CD4-positive, alpha-beta memory T cell (primary cell): ENCODE measurements at regions of chr4 and their contacts with region 1.

Region 1: DNA sequence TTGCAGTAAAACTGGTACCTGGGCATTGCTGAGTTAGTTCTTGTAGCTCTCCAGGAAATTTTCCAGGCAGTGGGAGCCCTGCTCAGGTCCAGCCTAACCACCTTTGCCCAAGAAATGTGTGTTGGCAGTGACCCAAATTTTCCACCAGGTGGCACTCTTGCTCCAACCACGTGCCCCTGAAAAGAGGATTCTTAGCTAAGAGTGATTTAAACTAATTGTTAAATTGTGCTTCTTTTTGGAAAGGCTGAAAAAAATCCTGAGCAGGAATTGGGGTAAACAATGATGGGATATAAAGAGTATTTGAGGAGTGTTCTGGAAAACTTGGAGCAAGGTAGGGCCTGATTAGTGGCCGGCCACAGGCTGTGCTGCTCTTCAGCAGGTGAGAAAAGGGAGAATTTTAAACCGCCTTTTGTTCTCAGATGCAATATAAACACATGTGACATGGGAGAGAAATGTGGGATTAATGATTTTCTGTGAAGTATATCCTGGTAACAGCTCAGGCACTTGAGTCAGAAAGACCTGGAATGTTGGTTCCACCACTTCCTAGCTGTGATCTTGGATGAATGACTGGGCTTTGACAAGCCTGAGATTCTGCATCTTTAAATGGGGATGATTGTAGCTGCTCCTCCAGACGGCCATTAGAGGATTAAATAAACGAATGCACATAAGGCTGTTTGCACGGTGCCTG is 219.6 kb downstream of the PTTG2 start:
- DNase-seq: peak; percentile 69 to 77 (median 70)
- H3K4me3 ChIP-seq: no peak overlapping the region
- H3K4me3 Mint-ChIP-seq: peak overlapping the region in 1 of 8 donors; percentile 8
- H3K27ac ChIP-seq: no peak overlapping the region
- H3K27ac Mint-ChIP-seq: peak overlapping the region in 5 of 7 donors; percentile 0 to 48 (median 35)
- H3K4me1 ChIP-seq: peaks cover 39% of the 10 kb centered on the region
- H3K4me1 Mint-ChIP-seq: peaks cover 29 to 58% (median 42%) of the 10 kb centered on the region in 4 donors
- H3K27me3 ChIP-seq: no peaks in the 10 kb centered on the region
- H3K27me3 Mint-ChIP-seq: no peaks in the 10 kb centered on the region

Region 2: GRCh38 chr4:38062088-38062893 is 117.5 kb before region 1 on chr4:
- CTCF ChIA-PET with region 1: interaction called, 114 read pairs
- POLR2A ChIA-PET with region 1: interaction called, 6 read pairs
- intact Hi-C with region 1: loop called (anchors 1 kb)
- DNase-seq: peak; percentile 38 to 51 (median 49)
- H3K4me3 ChIP-seq: peak overlapping the region in 1 of 2 donors; percentile 42
- H3K4me3 Mint-ChIP-seq: peak overlapping the region; percentile 73 to 94 (median 87)
- H3K27ac ChIP-seq: no peak overlapping the region
- H3K27ac Mint-ChIP-seq: peak overlapping the region; percentile 20 to 91 (median 72)
- H3K4me1 ChIP-seq: peaks cover 4% of the 10 kb centered on the region
- H3K4me1 Mint-ChIP-seq: peaks cover 7 to 16% (median 8%) of the 10 kb centered on the region in 4 donors
- H3K27me3 ChIP-seq: no peaks in the 10 kb centered on the region
- H3K27me3 Mint-ChIP-seq: no peaks in the 10 kb centered on the region

Region 3: DNA sequence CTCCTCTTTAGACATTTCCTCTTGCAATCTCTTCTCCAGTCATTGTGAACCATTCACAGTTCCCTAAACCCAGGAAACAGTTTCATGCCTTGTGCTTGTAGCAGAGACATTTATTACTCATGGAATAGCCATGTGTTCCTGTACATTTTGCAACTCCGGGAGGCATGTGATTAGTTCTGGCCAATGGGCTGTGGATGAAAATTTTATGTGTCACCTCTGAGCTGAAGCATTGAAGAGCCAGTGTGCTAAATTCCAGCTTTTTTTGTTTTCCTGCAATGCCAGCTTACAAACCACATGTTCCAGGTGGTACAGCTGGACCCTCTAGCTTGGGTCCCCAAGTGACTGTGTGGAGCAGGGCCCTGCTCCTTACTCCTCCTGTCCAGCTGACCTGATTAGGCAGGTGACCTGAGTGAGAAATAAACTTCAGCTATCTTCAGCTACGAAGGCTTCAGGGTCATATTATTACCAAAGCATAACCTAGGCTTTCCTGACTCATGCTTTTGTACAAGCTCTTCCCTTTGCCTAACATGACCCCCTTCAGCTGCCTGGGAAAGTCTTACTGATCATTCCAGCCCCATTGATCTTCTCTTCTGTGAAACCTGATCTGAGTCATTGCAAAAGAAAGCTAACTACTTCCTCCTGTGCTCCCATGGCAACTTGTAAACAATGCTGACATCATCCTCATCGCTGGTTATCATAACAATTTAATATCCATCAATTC is 19.2 kb before region 1 on chr4:
- CTCF ChIA-PET with region 1: interaction called, 15 read pairs
- POLR2A ChIA-PET with region 1: interaction called, 8 read pairs
- intact Hi-C with region 1: loop called (anchors 1 kb)
- DNase-seq: peak; percentile 66 to 85 (median 81)
- H3K4me3 ChIP-seq: no peak overlapping the region
- H3K4me3 Mint-ChIP-seq: peak overlapping the region in 3 of 8 donors; percentile 1 to 22 (median 14)
- H3K27ac ChIP-seq: peak overlapping the region; percentile 44
- H3K27ac Mint-ChIP-seq: peak overlapping the region; percentile 71 to 98 (median 91)
- H3K4me1 ChIP-seq: peaks cover 31% of the 10 kb centered on the region
- H3K4me1 Mint-ChIP-seq: peaks cover 11 to 48% (median 36%) of the 10 kb centered on the region in 4 donors
- H3K27me3 ChIP-seq: no peaks in the 10 kb centered on the region
- H3K27me3 Mint-ChIP-seq: no peaks in the 10 kb centered on the region

Region 4: GRCh38 chr4:38319456-38320342 is 139.9 kb after region 1 on chr4:
- CTCF ChIA-PET with region 1: interaction called, 78 read pairs
- POLR2A ChIA-PET with region 1: interaction called, 5 read pairs
- intact Hi-C with region 1: loop called (anchors 1 kb)
- DNase-seq: peak; percentile 77 to 85 (median 80)
- H3K4me3 ChIP-seq: peak overlapping the region in 1 of 2 donors; percentile 42
- H3K4me3 Mint-ChIP-seq: peak overlapping the region; percentile 80 to 96 (median 89)
- H3K27ac ChIP-seq: peak overlapping the region; percentile 65
- H3K27ac Mint-ChIP-seq: peak overlapping the region; percentile 88 to 98 (median 95)
- H3K4me1 ChIP-seq: peaks cover 30% of the 10 kb centered on the region
- H3K4me1 Mint-ChIP-seq: peaks cover 26 to 54% (median 41%) of the 10 kb centered on the region in 4 donors
- H3K27me3 ChIP-seq: no peaks in the 10 kb centered on the region
- H3K27me3 Mint-ChIP-seq: no peaks in the 10 kb centered on the region

Region 5: GRCh38 chr4:38663801-38664705 is 484.2 kb after region 1 on chr4 and contains the start of gene KLF3:
- CTCF ChIA-PET with region 1: interaction called, 41 read pairs
- POLR2A ChIA-PET with region 1: interaction called, 3 read pairs
- intact Hi-C with region 1: no loop called
- DNase-seq: peak; percentile 93 to 96 (median 94)
- H3K4me3 ChIP-seq: peak within 1 kb of the TSS; percentile 83 to 92
- H3K4me3 Mint-ChIP-seq: peak within 1 kb of the TSS; percentile 89 to 100 (median 98)
- H3K27ac ChIP-seq: peak within 1 kb of the TSS; percentile 92
- H3K27ac Mint-ChIP-seq: peak within 1 kb of the TSS; percentile 91 to 100 (median 99)
- H3K4me1 ChIP-seq: peaks cover 46% of the 10 kb centered on the region
- H3K4me1 Mint-ChIP-seq: peaks cover 40 to 80% (median 56%) of the 10 kb centered on the region in 4 donors
- H3K27me3 ChIP-seq: no peaks in the 10 kb centered on the region
- H3K27me3 Mint-ChIP-seq: no peaks in the 10 kb centered on the region
- total RNA-seq, gene KLF3: 119 to 122 TPM

Region 6: DNA sequence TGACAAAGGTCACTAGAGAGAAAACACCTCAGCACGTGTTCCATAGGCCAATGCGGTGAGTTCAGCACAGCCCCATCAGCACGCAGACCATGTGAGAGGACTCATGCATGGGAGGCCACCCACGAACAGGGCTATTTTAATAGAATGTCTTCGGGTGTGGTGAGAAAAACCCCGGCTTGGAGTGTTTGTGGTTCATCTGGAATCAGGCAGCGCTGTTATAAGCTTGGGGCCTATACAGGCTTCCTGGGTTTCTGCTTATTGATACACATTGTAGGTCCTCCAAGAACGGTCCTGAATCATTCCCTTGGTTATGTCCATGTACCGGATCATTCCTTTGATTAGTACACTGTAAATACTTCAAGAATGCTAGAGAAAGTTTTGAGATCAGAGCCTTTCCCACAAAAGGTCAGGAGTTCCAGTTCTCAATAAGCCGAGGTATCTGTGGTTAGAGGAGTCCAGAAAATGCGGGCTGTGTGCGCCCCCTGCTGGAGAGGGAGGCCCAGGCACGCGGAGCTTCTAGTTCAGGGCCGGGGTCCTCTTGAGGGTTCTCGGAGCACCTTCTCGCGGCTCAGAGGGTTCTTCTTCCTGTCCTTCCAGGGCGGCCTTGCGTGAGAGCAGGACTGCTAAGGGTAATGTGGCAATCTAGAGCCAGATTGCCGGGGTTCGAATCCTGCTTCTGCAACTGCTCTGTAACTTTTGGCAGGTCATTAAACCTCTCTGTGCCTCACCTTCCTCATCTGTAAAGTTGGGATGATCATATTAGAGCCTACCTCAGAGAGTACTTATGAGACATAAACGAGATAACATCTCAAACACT is 551.2 kb after region 1 on chr4:
- CTCF ChIA-PET with region 1: interaction called, 292 read pairs
- POLR2A ChIA-PET with region 1: interaction called, 21 read pairs
- intact Hi-C with region 1: loop called (anchors 1 kb)
- DNase-seq: peak; percentile 75 to 77 (median 76)
- H3K4me3 ChIP-seq: no peak overlapping the region
- H3K4me3 Mint-ChIP-seq: peak overlapping the region in 1 of 8 donors; percentile 39
- H3K27ac ChIP-seq: no peak overlapping the region
- H3K27ac Mint-ChIP-seq: peak overlapping the region in 2 of 7 donors; percentile 8 to 62
- H3K4me1 ChIP-seq: peaks cover 18% of the 10 kb centered on the region
- H3K4me1 Mint-ChIP-seq: peaks cover 12 to 29% (median 18%) of the 10 kb centered on the region in 4 donors
- H3K27me3 ChIP-seq: no peaks in the 10 kb centered on the region
- H3K27me3 Mint-ChIP-seq: peaks cover 0 to 3% of the 10 kb centered on the region in 2 donors

Region 7: DNA sequence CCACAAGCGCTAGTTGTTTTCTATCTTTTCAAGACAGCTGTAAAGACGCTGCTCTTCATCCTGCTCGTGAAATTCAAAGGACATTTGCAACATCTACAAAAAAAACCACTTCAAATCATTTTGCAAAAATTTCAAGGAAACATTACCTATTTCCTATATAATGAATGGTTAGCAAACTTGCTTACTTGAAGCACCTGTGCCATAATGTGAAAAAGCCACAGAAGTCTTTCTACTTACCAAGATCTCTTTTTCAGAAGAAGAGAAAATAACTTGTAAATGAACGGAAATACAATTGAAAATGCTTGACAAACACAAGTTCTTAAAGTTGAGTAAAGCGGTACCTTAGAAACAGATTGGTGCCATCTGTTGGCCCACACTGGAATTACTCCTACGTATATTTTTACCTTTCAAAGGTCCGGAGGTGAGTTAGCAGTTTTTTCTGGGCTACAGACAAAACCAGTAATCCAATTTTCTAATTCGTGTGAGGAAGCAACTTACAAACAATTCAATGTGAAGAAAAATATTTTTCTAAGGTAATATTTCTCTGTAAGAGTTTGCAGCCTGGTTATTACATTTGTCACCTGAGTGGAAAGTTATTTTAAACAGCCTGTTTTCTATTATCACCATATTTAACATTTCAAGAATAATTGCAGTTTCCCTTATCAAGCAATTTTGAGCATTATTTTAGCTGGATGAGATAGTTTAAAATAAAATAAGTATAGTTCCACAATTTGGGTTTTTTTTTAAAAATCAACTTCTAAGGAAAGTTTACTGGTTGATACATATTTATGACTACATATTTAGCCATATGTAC is 676.9 kb after region 1 on chr4 and contains the start of gene TLR6:
- CTCF ChIA-PET with region 1: interaction called, 9 read pairs
- POLR2A ChIA-PET with region 1: no interaction called
- intact Hi-C with region 1: loop called (anchors 5 kb)
- DNase-seq: peak; percentile 70 to 81 (median 76)
- H3K4me3 ChIP-seq: peak within 1 kb of the TSS; percentile 4 to 43
- H3K4me3 Mint-ChIP-seq: peak within 1 kb of the TSS; percentile 74 to 87 (median 81)
- H3K27ac ChIP-seq: peak within 1 kb of the TSS; percentile 33
- H3K27ac Mint-ChIP-seq: peak within 1 kb of the TSS; percentile 80 to 93 (median 87)
- H3K4me1 ChIP-seq: peaks cover 30% of the 10 kb centered on the region
- H3K4me1 Mint-ChIP-seq: peaks cover 24 to 39% (median 31%) of the 10 kb centered on the region in 4 donors
- H3K27me3 ChIP-seq: no peaks in the 10 kb centered on the region
- H3K27me3 Mint-ChIP-seq: peaks cover 0 to 2% of the 10 kb centered on the region in 2 donors
- total RNA-seq, gene TLR6: 7.3 to 7.7 TPM